ENCODE measurements at regions of chr14 and their contacts with region 1.

Region 1: GRCh38 chr14:34496679-34497513 is 34.9 kb upstream of the SPTSSA start:
- DNase-seq: peak; percentile 97
- ATAC-seq: peak; percentile 88
- H3K4me3 ChIP-seq: peak overlapping the region; percentile 19 to 43; a peak in 3 of 4 replicates
- H3K27ac ChIP-seq: peak overlapping the region; percentile 62
- H3K4me1 ChIP-seq: peaks cover 21 to 36% of the 10 kb centered on the region in 2 experiments
- H3K27me3 ChIP-seq: no peaks in the 10 kb centered on the region
- CTCF ChIP-seq: peak in 2 of 3 experiments; percentile 12 to 22; a peak in 2 of 6 replicates
- POLR2A ChIP-seq: no peak
- RAD21 ChIP-seq: peak; percentile 19; the same call in 1 of the 2 replicates

Region 2: GRCh38 chr14:33979613-33980276 is 517.2 kb before region 1 on chr14:
- CTCF ChIA-PET with region 1: no interaction called
- POLR2A ChIA-PET with region 1: no interaction called
- RAD21 ChIA-PET with region 1: no interaction called
- intact Hi-C with region 1: no loop called
- DNase-seq: no peak
- ATAC-seq: no peak
- H3K4me3 ChIP-seq: no peak overlapping the region
- H3K27ac ChIP-seq: no peak overlapping the region
- H3K4me1 ChIP-seq: no peaks in the 10 kb centered on the region
- H3K27me3 ChIP-seq: no peaks in the 10 kb centered on the region
- CTCF ChIP-seq: no peak
- POLR2A ChIP-seq: no peak
- RAD21 ChIP-seq: no peak

Region 3: GRCh38 chr14:34211732-34212131 is 285.2 kb before region 1 on chr14:
- CTCF ChIA-PET with region 1: no interaction called
- POLR2A ChIA-PET with region 1: no interaction called
- RAD21 ChIA-PET with region 1: no interaction called
- intact Hi-C with region 1: no loop called
- DNase-seq: no peak
- ATAC-seq: no peak
- H3K4me3 ChIP-seq: no peak overlapping the region
- H3K27ac ChIP-seq: no peak overlapping the region
- H3K4me1 ChIP-seq: no peaks in the 10 kb centered on the region
- H3K27me3 ChIP-seq: peaks cover 23% of the 10 kb centered on the region; the same call in 1 of the 2 replicates
- CTCF ChIP-seq: no peak
- POLR2A ChIP-seq: no peak
- RAD21 ChIP-seq: no peak

Region 4: DNA sequence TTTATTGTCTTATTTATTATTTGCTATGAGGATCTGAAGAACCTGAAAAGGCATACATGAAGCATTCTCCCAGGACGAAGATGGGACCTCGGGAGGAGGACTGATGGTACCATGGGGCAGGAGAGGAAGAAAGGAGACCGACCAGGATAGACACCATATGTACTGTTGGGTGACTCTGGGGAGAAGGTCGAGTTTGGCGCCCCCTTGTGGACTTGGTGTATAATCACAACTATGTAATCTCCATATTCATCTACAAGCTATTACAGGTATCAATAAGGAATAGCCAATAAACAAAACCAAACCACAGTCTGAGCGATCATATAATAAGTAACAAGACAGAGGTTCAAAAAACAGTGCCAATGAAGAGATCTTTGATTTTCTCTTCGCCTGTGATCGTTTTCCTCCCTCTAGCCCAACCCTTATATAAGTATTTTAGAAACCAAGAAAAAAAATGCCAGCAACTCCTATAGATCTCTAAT is 173.9 kb before region 1 on chr14:
- CTCF ChIA-PET with region 1: interaction called, 9 read pairs
- POLR2A ChIA-PET with region 1: no interaction called
- RAD21 ChIA-PET with region 1: interaction called in 1 of 2 experiments, 4 read pairs
- intact Hi-C with region 1: loop called (anchors 2 kb)
- DNase-seq: peak; percentile 46
- ATAC-seq: peak; percentile 92
- H3K4me3 ChIP-seq: no peak overlapping the region
- H3K27ac ChIP-seq: no peak overlapping the region
- H3K4me1 ChIP-seq: no peaks in the 10 kb centered on the region
- H3K27me3 ChIP-seq: peaks cover 9% of the 10 kb centered on the region; the same call in 1 of the 2 replicates
- CTCF ChIP-seq: peak; percentile 35 to 92 (median 72); a peak in 5 of 6 replicates
- POLR2A ChIP-seq: no peak
- RAD21 ChIP-seq: peak; percentile 36

Measured in HCT116 (cell line).